Esophagus muscularis mucosa (tissue), 4 donors: ENCODE measurements at regions of chr14 and their contacts with region 1.

Region 1: DNA sequence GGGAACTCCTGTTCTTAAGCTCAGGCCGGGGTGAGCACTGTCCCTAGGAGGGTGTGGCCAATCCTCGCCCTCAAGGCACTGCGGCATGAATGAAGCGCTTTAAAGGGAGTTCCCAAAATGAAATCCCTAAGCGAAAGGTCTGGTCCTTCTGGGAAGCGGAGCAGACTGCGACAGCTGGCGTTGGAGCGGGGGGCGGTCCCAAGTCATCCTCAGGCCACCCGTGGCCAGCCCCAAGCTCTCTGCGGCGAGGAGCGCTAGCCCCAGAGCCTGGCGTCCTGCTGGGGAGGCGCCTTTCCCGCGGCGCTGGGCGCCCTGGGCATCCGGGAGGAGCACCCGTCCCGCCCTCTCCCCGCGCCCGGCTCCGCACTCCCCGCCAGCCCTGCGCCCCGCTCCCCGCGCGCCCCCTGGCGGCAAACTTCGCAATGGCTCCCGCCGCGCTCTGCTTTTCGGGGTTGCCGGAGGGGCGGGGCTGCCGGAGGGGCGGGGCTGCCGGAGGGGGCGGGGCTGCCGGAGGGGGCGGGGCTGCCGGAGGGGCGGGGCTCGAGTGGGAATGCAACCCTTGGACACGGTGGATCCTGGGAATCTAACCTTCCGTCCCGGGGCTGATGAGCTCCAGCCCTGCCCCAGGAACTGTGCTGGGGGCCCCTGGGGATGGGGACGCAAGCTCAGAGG is 25.4 kb downstream of the ZBTB42 start:
- DNase-seq: peak; percentile 97
- H3K4me3 ChIP-seq: peak overlapping the region; percentile 54 to 78 (median 61)
- H3K27ac ChIP-seq: peak overlapping the region; percentile 38 to 63 (median 52)
- H3K4me1 ChIP-seq: peaks cover 20 to 28% (median 26%) of the 10 kb centered on the region in 4 donors
- H3K27me3 ChIP-seq: no peaks in the 10 kb centered on the region
- CTCF ChIP-seq: peak; percentile 81 to 92 (median 82)
- EP300 ChIP-seq: no peak
- POLR2A ChIP-seq: no peak

Region 2: GRCh38 chr14:104499784-104500760 is 326.3 kb before region 1 on chr14:
- intact Hi-C with region 1: no loop called
- DNase-seq: no peak
- H3K4me3 ChIP-seq: no peak overlapping the region
- H3K27ac ChIP-seq: no peak overlapping the region
- H3K4me1 ChIP-seq: no peaks in the 10 kb centered on the region
- H3K27me3 ChIP-seq: peaks cover 0 to 29% (median 0%) of the 10 kb centered on the region in 4 donors
- CTCF ChIP-seq: no peak
- EP300 ChIP-seq: no peak
- POLR2A ChIP-seq: no peak

Region 3: DNA sequence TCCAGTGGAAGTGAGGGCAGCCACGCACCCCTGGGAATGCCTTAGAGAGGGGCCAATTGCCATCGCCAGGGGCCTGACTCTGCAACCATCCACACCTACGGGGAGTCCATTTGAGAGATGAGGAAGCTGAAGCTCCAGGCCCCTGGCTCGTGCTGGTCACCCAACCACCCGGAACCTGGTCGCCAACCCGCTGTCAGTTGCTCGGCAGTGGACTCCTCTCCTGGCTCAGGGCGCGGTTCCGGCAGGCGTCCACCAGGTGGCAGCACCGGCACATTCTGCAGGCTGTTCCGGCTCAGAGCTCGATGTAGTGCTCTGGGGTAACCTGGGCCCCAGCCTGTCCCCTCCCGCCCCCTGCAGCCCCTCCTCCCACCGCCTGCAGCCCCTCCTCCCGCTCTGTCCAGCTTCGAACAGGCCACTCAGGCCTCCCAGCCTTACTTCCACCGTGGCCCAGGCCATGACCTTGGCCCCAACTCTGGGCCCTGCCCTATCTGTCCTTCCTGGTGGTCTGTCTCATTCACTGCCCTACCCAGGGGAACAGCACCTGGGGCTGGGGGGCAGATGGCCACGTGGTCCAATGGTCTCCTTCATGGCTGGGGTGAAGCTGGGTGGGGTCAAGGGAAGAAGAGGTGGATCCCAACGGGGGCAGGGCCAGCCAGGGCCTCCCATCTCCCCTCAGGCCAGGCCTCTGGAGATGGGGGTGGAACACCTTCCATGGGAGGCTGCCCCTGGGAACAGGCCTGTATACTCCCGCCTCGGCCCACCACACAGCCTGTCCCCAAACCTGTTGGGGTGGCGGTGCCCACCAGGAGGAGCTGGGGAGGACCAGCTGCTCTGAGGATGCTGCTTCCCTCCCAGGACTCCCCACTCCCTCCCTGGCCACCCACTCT is 57.6 kb before region 1 on chr14:
- intact Hi-C with region 1: loop called (anchors 1 kb)
- DNase-seq: peak; percentile 97
- H3K4me3 ChIP-seq: no peak overlapping the region
- H3K27ac ChIP-seq: peak overlapping the region; percentile 45 to 56 (median 52)
- H3K4me1 ChIP-seq: peaks cover 5 to 15% (median 11%) of the 10 kb centered on the region in 4 donors
- H3K27me3 ChIP-seq: no peaks in the 10 kb centered on the region
- CTCF ChIP-seq: peak in 2 of 3 experiments; percentile 91 to 97
- EP300 ChIP-seq: no peak
- POLR2A ChIP-seq: no peak

Region 4: DNA sequence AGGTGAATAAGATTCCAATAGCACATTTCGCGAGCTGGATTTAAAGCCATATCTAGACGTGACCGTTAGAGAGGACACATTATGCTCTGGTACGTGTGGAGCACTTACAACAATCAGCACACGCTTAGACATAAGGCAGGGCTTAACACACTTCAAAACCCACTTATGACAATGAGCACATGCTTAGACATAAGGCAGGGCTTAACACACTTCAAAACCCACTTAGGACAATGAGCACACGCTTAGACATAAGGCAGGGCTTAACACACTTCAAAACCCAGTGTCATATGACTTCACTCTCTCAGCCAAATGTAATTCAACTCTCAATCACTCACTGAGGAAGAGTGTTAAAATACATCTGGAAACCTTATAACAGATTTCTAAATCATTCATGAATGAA is 87.1 kb after region 1 on chr14:
- intact Hi-C with region 1: no loop called
- DNase-seq: no peak
- H3K4me3 ChIP-seq: no peak overlapping the region
- H3K27ac ChIP-seq: no peak overlapping the region
- H3K4me1 ChIP-seq: no peaks in the 10 kb centered on the region
- H3K27me3 ChIP-seq: no peaks in the 10 kb centered on the region
- CTCF ChIP-seq: no peak
- EP300 ChIP-seq: no peak
- POLR2A ChIP-seq: no peak

Region 5: DNA sequence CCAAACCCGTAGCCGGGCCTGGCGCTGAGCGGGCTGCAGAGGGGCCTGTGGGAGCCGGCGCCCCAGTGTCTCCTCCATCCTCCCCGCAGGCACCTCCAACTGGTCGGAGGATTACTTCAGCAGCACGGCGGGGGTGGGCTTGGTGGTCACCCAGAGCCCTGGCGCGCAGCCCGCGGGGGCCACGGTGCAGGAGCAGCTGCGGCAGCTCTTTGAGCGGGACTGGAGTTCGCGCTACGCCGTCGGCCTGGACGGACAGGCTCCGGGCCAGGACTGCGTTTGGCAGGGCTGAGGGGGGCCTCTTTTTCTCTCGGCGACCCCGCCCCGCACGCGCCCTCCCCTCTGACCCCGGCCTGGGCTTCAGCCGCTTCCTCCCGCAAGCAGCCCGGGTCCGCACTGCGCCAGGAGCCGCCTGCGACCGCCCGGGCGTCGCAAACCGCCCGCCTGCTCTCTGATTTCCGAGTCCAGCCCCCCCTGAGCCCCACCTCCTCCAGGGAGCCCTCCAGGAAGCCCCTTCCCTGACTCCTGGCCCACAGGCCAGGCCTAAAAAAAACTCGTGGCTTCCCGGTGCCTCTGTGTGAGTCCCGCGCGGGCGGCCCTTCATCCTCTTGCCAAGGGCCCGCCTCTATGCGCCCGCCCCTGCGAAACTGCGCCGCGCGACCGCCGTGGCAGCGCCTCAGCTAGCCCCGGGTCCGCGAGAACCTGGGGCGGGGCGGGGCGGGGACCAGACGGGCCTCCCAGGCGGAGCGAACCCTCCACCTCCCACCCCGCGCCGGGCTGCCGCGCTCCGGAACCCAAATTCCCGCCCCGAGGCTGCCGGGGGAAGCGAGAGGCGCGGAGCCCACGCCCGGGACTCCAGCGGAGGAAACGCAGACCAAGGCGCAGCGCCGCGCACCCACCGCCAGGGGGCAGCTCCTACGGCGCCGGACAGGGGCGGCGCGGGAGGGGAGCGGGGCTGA is 106.6 kb after region 1 on chr14:
- intact Hi-C with region 1: no loop called
- DNase-seq: peak; percentile 93
- H3K4me3 ChIP-seq: peak overlapping the region; percentile 64 to 82 (median 67)
- H3K27ac ChIP-seq: peak overlapping the region; percentile 76 to 81 (median 78)
- H3K4me1 ChIP-seq: peaks cover 11 to 34% (median 25%) of the 10 kb centered on the region in 4 donors
- H3K27me3 ChIP-seq: no peaks in the 10 kb centered on the region
- CTCF ChIP-seq: peak; percentile 77 to 84 (median 84)
- EP300 ChIP-seq: no peak
- POLR2A ChIP-seq: no peak

Region 6: DNA sequence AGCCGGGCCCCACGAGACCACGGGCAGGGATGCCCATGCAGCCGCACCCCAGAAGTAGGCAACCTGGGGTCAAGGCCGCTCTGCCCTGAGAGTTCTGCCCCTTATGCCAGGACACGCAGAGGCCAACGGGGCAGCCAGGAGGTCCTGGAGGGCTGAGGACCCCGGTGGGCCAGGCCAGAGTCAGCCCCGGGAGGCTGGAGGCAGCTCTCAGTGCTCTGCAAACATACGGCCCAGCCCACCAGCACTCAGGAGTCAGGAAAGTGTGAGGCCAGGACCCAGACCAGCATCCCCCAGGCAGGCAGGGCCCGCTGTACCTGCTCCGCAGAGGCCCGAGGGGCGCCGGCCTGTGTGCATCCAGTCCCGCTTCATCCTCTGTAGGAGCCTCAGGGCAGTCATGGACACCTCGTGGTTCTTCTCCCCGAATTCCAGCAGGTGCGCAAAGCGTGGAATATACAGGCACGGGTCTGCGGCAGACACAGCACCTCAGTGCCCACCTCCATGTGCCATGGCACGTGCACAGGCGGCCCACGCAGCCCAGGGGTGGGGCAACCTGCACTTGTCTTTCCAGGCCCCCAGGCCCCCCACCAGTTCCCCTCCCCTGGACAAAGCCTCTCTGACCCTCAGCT is 414.7 kb after region 1 on chr14:
- intact Hi-C with region 1: no loop called
- DNase-seq: no peak
- H3K4me3 ChIP-seq: no peak overlapping the region
- H3K27ac ChIP-seq: no peak overlapping the region
- H3K4me1 ChIP-seq: no peaks in the 10 kb centered on the region
- H3K27me3 ChIP-seq: no peaks in the 10 kb centered on the region
- CTCF ChIP-seq: no peak
- EP300 ChIP-seq: no peak
- POLR2A ChIP-seq: no peak